Transverse colon (tissue), 4 donors: ENCODE measurements at regions of chr17 and their contacts with region 1.

Region 1: GRCh38 chr17:65750631-65751117 is 189.2 kb upstream of the AXIN2 start:
- DNase-seq: peak; percentile 70
- H3K4me3 ChIP-seq: no peak overlapping the region
- H3K27ac ChIP-seq: no peak overlapping the region
- H3K4me1 ChIP-seq: peaks cover 6 to 12% (median 9%) of the 10 kb centered on the region in 4 donors
- H3K27me3 ChIP-seq: no peaks in the 10 kb centered on the region
- CTCF ChIP-seq: no peak
- EP300 ChIP-seq: no peak
- POLR2A ChIP-seq: no peak

Region 2: DNA sequence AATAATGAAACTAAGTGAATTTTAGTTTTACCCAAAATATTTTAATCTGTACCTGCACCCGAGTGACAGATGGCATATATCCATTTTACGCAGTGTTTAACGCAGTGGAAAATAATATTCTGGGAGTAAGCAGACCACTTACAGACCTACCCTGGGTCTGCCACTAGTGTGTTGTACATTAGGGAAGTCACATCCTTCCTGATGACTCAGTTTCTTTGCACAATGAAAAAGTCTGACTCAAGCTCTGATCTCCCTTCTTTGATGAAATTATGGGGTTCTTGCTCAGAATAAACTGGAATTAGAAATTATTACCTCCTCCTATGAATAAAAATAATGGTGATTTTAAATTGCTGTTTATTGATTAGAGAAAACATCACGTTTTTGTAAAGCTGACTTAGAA is 66.0 kb before region 1 on chr17:
- in situ Hi-C with region 1: no loop called
- intact Hi-C with region 1: no loop called
- DNase-seq: no peak
- H3K4me3 ChIP-seq: no peak overlapping the region
- H3K27ac ChIP-seq: no peak overlapping the region
- H3K4me1 ChIP-seq: no peaks in the 10 kb centered on the region
- H3K27me3 ChIP-seq: no peaks in the 10 kb centered on the region
- CTCF ChIP-seq: no peak
- EP300 ChIP-seq: no peak
- POLR2A ChIP-seq: no peak

Region 3: GRCh38 chr17:65707780-65708179 is 42.9 kb before region 1 on chr17:
- in situ Hi-C with region 1: no loop called
- intact Hi-C with region 1: loop called (anchors 2 kb)
- DNase-seq: no peak
- H3K4me3 ChIP-seq: no peak overlapping the region
- H3K27ac ChIP-seq: no peak overlapping the region
- H3K4me1 ChIP-seq: peaks cover 0 to 10% (median 1%) of the 10 kb centered on the region in 4 donors
- H3K27me3 ChIP-seq: no peaks in the 10 kb centered on the region
- CTCF ChIP-seq: no peak
- EP300 ChIP-seq: no peak
- POLR2A ChIP-seq: no peak